Mammary epithelial cell (primary cell): ENCODE measurements at regions of chr9 and their contacts with region 1.

Region 1: GRCh38 chr9:123268240-123268949 is at the start of gene STRBP:
- DNase-seq: peak; percentile 87
- H3K4me3 ChIP-seq: peak within 1 kb of the TSS; percentile 81 to 85 (median 82)
- H3K27ac ChIP-seq: no peak within 1 kb of the TSS
- H3K4me1 ChIP-seq: peaks cover 5% of the 10 kb centered on the region
- H3K27me3 ChIP-seq: no peaks in the 10 kb centered on the region
- CTCF ChIP-seq: no peak
- total RNA-seq, gene STRBP: 10.8 to 11.6 TPM

Region 2: GRCh38 chr9:123102375-123103110 is 165.9 kb before region 1 on chr9:
- CTCF ChIA-PET with region 1: no interaction called
- dilution Hi-C with region 1: no loop called
- in situ Hi-C with region 1: no loop called
- intact Hi-C with region 1: loop called (anchors 5 kb)
- DNase-seq: peak; percentile 58
- H3K4me3 ChIP-seq: no peak overlapping the region
- H3K27ac ChIP-seq: no peak overlapping the region
- H3K4me1 ChIP-seq: no peaks in the 10 kb centered on the region
- H3K27me3 ChIP-seq: no peaks in the 10 kb centered on the region
- CTCF ChIP-seq: peak; percentile 32 to 59

Region 3: GRCh38 chr9:123238365-123238764 is 30.0 kb before region 1 on chr9:
- CTCF ChIA-PET with region 1: no interaction called
- dilution Hi-C with region 1: no loop called
- in situ Hi-C with region 1: no loop called
- intact Hi-C with region 1: no loop called
- DNase-seq: no peak
- H3K4me3 ChIP-seq: no peak overlapping the region
- H3K27ac ChIP-seq: no peak overlapping the region
- H3K4me1 ChIP-seq: no peaks in the 10 kb centered on the region
- H3K27me3 ChIP-seq: no peaks in the 10 kb centered on the region
- CTCF ChIP-seq: no peak

Region 4: DNA sequence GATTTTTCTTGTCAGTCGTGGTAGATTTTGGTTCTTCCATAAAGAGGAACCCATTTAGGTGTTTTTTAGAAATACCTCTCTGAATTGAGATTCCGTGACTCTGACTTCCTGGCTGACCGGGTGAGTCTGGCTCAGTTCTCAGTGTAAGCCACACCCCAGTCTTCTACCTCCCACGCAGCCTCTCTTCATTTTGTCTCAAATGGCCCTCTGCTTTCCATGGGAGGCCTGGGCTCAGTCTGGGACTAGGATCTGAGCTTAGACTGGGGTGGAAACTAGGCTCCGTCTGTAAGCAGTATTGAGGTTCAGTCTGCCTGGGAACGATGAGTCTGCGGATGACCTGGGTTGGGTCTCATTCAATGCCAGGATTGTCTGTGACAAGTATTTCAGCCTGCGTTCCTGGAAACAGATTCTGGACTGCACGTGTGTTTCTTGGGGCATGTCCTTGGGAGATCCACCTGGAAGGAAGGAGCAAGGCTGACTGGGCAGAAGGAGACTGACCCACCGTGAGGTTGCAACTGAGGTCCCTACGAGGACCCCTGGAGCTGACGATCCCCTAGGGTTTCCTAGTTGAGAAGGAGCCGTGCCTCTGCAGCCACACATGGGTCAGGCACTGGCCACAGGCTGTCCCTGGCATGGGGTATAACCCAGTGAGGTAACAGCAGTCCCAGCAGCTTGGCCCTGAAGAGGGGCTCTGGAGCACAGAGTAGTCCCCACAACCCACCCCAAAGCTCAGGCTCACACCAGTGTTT is 75.2 kb after region 1 on chr9:
- CTCF ChIA-PET with region 1: no interaction called
- dilution Hi-C with region 1: no loop called
- in situ Hi-C with region 1: no loop called
- intact Hi-C with region 1: loop called (anchors 2 kb)
- DNase-seq: peak; percentile 39
- H3K4me3 ChIP-seq: no peak overlapping the region
- H3K27ac ChIP-seq: no peak overlapping the region
- H3K4me1 ChIP-seq: peaks cover 17% of the 10 kb centered on the region
- H3K27me3 ChIP-seq: no peaks in the 10 kb centered on the region
- CTCF ChIP-seq: no peak